Right ventricle myocardium superior (tissue), 1 donor: ENCODE measurements at regions of chr9 and their contacts with region 1.

Region 1: DNA sequence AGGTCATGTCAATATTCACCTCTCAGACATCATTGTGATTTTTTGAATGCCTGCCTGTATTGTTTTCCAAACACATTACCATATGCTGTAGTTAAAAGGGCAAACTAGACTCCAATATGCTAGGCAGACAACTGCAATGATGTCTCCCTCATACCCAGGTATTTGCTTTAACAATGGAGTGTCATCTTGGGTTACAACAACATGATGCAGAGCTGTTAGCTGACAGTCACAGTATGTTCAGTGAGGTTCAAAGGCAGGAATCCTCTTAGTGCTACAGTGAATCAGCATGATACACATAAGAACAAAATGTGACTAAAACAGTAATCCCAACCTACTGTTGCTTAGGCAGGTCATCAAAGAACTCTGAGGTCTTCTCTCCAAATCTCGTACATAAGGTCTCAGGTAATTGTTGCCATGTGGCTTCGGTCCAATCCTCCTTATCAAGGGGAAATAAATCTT is 24.0 kb downstream of the OR1J1 start:
- DNase-seq: no peak
- ATAC-seq: no peak

Region 2: GRCh38 chr9:122107291-122107805 is 346.4 kb before region 1 on chr9:
- intact Hi-C with region 1: loop called (anchors 10 kb)
- DNase-seq: no peak
- ATAC-seq: peak; percentile 58

Region 3: GRCh38 chr9:122264360-122265148 is 189.2 kb before region 1 on chr9 and contains the starts of genes MRRF and RBM18:
- intact Hi-C with region 1: no loop called
- DNase-seq: peak; percentile 96
- ATAC-seq: peak; percentile 97
- total RNA-seq, gene MRRF: 35.7 TPM
- total RNA-seq, gene RBM18: 37.3 TPM

Region 4: DNA sequence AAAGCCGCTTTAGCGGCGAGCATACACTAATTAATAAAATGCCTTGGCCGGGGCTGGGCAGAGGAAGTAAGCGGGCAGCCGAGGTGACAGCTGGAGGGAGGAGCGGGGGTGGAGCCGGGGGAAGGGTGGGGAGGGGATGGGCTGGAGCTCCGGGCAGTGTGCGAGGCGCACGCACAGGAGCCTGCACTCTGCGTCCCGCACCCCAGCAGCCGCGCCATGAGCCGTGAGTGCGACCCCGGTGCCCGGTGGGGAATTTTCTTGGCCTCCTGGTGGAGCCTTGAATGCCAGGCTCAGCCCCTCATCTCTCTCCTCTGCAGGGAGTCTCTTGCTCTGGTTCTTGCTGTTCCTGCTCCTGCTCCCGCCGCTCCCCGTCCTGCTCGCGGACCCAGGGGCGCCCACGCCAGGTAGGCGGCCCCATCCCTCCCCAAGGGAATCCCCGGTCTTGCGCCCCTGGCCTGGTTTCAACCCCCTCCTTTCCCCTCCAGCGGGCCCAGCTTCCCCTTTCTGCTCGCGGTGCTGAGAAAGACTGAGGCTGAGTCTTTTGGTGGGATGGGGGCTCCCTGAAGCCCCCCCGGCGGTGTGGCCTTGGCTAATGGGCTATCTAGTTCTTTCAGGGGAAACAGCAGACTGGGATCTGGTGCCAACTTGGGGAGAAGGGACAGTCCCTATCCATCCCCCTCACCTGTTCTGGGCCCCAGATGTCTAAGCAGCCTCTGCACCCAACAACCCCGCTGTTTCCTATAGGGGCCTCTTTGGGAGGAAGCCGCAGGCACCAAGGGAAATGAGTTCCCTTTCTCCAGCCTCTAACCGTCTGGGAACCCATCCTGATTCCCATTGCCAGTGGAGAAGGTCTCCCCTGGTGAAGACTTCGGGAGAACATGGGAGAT is 82.6 kb before region 1 on chr9 and contains the start of gene PTGS1:
- intact Hi-C with region 1: loop called (anchors 10 kb)
- DNase-seq: peak; percentile 75
- ATAC-seq: peak; percentile 69
- total RNA-seq, gene PTGS1: 4.0 TPM